Sigmoid colon (tissue), 7 donors: ENCODE measurements at regions of chr1 and their contacts with region 1.

Region 1: DNA sequence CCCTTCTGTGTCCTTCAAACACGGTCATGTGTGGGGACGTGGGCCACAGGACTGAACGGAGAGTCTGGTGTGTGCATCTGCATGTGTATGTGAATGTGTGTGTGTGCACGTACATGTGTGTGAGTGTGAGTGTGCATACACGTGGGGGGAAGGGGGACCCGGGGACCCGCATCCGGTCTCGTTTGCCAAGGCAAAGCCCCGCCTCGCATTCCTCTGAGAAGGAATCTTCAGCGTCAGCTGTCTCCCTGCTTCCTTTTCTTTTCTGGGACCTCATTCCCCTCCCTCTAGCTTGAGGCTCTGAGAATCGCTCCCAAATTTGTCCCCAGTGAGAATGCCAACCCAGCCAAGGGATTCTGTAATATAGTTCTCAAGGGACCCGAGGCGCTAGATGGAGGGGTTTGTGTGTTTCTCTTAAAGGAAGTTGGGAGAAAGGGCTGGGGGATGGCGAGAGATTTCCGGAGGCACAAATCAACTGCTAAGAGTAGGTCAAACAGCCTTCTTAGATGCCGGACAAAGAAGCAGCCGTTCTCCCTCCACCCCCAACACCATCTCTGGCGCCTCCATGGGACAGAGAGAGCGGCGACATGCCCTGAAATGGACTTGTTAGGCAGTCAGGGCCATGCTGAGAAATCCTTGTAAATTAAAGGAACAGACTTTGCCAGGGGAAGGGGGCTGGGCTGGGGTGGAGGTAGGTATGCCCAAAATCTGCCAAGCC is 6.6 kb downstream of the IFFO2 start:
- DNase-seq: peak; percentile 84
- H3K4me3 ChIP-seq: peak overlapping the region; percentile 11 to 38 (median 33)
- H3K27ac ChIP-seq: peak overlapping the region; percentile 92 to 95 (median 94)
- H3K4me1 ChIP-seq: peaks cover 0 to 99% (median 91%) of the 10 kb centered on the region in 4 donors
- H3K27me3 ChIP-seq: no peaks in the 10 kb centered on the region
- CTCF ChIP-seq: peak in 1 of 4 experiments; percentile 52
- EP300 ChIP-seq: no peak
- POLR2A ChIP-seq: no peak

Region 2: DNA sequence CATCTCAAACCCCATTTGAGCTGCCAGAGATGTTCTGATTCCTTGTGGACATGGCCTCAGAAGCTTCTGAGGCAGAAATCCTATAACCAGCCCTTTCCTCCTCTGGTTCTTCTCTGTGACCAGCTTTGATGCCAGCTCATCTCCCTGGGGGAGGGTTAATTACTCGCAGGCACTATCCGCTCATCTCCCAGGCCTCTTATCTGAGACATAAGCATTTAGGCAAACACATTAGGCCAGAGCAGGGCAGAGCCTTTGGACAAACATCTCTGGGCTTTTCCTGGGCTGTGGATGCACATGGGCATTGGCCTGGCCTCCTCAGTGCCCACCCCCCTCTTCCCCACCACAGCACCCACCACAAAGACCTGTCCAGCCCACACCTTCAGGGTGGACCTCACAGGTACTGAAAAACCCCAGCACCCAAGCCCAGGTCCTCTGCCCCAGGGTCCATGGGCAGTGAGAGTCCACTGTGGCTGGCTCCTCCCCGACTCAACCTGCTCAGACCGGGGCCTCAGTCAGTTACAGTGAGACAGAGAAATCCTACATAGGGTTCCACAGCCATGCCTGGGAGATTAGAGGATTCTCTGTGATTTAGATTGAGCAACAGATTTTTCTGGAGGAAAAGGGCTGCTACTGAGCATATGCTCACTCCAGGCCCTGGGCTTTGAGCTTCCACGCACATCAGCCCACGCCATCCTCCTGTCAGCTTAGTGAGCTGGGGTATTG is 815.4 kb before region 1 on chr1:
- intact Hi-C with region 1: no loop called
- DNase-seq: no peak
- H3K4me3 ChIP-seq: no peak overlapping the region
- H3K27ac ChIP-seq: no peak overlapping the region
- H3K4me1 ChIP-seq: peaks cover 0 to 27% (median 20%) of the 10 kb centered on the region in 4 donors
- H3K27me3 ChIP-seq: no peaks in the 10 kb centered on the region
- CTCF ChIP-seq: no peak
- EP300 ChIP-seq: no peak
- POLR2A ChIP-seq: no peak

Region 3: DNA sequence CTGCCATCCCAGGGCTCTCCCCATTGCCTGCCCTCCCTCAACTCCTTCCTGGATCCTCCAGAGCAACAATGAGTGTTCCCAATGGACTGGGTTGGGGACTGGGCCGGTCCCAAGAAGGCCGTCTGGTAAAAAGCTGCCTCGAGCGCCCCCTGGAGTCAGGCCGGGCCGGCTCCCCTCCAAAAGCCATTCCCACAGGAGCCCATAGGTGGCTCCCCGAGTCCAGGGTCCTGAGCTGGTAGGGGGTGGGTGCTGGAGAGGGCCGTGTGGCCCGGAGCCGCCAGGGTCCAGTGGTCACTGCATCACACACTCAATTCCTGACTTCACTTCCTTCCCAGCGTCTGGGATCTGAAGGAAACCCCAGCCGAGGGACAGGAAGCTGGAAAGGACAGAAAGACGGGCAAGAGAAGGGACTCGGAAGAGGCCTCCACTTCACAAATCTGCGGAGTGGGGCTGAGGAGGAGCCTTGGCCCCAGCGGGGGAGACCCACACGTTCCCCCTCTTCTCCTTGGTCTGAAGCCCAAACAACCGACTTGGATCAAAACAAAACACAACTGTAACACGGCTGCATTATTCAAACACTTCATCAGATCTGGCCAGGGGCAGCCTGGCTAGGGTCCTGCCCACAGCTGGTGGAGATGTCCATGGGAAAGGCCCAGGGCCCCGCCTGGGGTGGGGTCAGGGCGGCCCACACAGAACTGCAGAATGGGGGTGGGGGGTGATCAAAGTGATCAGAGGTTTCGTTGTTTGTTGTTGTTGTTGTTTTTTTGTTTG is 36.6 kb before region 1 on chr1:
- intact Hi-C with region 1: loop called (anchors 5 kb)
- DNase-seq: peak; percentile 92
- H3K4me3 ChIP-seq: no peak overlapping the region
- H3K27ac ChIP-seq: peak overlapping the region; percentile 41 to 65 (median 63)
- H3K4me1 ChIP-seq: peaks cover 0 to 12% (median 10%) of the 10 kb centered on the region in 4 donors
- H3K27me3 ChIP-seq: no peaks in the 10 kb centered on the region
- CTCF ChIP-seq: peak; percentile 91 to 98 (median 96)
- EP300 ChIP-seq: no peak
- POLR2A ChIP-seq: no peak